ENCODE measurements at regions of chr9 and their contacts with region 1.

Region 1: GRCh38 chr9:126558051-126558665 is 55.6 kb upstream of the LMX1B start:
- ATAC-seq: peak; percentile 50 to 84 (median 69)
- H3K4me3 ChIP-seq: no peak overlapping the region
- H3K27ac ChIP-seq: no peak overlapping the region
- H3K4me1 ChIP-seq: no peaks in the 10 kb centered on the region

Region 2: GRCh38 chr9:126500684-126501382 is 57.3 kb before region 1 on chr9:
- in situ Hi-C with region 1: loop called in 2 of 9 experiments (anchors 10 kb)
- ATAC-seq: peak; percentile 61 to 86 (median 81)
- H3K4me3 ChIP-seq: no peak overlapping the region
- H3K27ac ChIP-seq: no peak overlapping the region
- H3K4me1 ChIP-seq: peaks cover 4 to 10% of the 10 kb centered on the region in 2 donors

Measured in motor neuron (in vitro differentiated cells).